PC-9 (cell line): ENCODE measurements at regions of chr13 and their contacts with region 1.

Region 1: DNA sequence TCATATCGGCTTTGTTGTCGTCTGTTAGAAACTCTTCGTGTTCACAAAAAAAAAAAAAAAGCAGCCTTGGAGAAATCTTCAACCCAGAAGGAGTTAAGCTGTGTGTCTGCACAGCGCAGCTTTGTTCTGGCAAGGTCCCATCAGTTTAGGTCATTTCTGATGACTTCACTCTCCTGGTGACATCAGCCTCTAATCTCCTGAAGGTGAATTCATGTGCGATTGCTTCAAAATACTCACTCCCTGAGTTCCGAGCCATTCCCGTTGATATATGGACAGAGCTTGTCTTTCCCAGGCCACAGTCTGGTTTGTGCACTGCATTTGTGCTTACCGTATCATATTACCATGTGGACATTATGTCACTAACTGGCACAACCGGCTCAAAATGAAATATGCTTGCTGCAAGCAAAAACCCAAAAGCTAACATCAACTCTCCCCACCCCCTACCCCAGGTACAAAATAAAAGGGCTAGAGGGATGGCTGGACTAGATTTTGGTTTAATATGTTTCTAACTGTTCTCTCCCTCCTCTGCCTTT is 342.4 kb downstream of the KCNRG start:
- DNase-seq: peak; percentile 67 to 96
- H3K4me3 ChIP-seq: peak overlapping the region; percentile 22; the same call in 1 of the 2 replicates
- H3K27ac ChIP-seq: peak overlapping the region; percentile 79
- H3K4me1 ChIP-seq: peaks cover 27% of the 10 kb centered on the region
- H3K27me3 ChIP-seq: no peaks in the 10 kb centered on the region
- CTCF ChIP-seq: no peak

Region 2: DNA sequence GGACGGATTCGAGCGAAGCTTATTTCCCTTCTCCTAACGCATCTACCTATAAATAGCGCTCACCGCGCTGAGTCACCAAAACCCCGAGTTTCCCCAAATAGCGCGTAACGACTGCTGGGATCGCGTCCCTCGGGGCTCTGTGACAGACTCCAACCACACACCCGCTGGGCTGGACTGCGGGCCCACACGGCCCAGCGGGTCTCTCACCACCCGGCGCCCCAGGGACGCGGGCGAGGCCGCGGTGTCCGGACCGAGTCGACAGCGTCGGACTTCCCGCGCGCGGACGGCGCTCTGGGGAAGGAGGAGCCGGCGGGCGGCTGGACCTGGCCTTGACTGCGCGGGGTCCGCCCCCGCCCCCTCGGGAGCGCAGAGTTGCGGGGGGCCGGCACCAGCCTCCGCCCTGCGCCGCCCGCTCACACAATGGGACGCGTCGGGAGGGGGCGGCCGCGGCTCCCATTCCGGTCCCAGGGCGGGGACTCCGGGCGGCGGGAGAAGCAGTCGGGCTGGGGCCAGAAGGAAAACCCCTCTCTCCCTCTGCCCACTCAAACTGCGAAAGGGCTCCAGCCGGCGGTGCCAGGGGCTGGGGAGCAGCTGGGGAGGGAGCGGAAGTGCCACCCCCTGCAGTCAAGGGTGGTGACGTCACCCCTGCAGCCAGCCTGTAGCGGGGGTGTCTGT is 233.7 kb before region 1 on chr13:
- CTCF ChIA-PET with region 1: no interaction called
- POLR2A ChIA-PET with region 1: no interaction called
- intact Hi-C with region 1: loop called (anchors 1 kb)
- DNase-seq: peak; percentile 82 to 93
- H3K4me3 ChIP-seq: peak overlapping the region; percentile 91
- H3K27ac ChIP-seq: peak overlapping the region; percentile 80
- H3K4me1 ChIP-seq: peaks cover 24% of the 10 kb centered on the region
- H3K27me3 ChIP-seq: no peaks in the 10 kb centered on the region
- CTCF ChIP-seq: no peak

Region 3: GRCh38 chr13:50225193-50226155 is 132.2 kb before region 1 on chr13:
- CTCF ChIA-PET with region 1: no interaction called
- POLR2A ChIA-PET with region 1: interaction called, 10 read pairs
- intact Hi-C with region 1: no loop called
- DNase-seq: no peak
- H3K4me3 ChIP-seq: no peak overlapping the region
- H3K27ac ChIP-seq: no peak overlapping the region
- H3K4me1 ChIP-seq: 0 out of 2 replicates have a peak, but pooled peaks cover 5% of the 10 kb centered on the region
- H3K27me3 ChIP-seq: no peaks in the 10 kb centered on the region
- CTCF ChIP-seq: no peak

Region 4: GRCh38 chr13:50244713-50245574 is 112.7 kb before region 1 on chr13:
- CTCF ChIA-PET with region 1: no interaction called
- POLR2A ChIA-PET with region 1: no interaction called
- intact Hi-C with region 1: loop called (anchors 1 kb)
- DNase-seq: peak; percentile 72 to 97
- H3K4me3 ChIP-seq: no peak overlapping the region
- H3K27ac ChIP-seq: peak overlapping the region; percentile 67
- H3K4me1 ChIP-seq: peaks cover 23% of the 10 kb centered on the region
- H3K27me3 ChIP-seq: no peaks in the 10 kb centered on the region
- CTCF ChIP-seq: no peak

Region 5: DNA sequence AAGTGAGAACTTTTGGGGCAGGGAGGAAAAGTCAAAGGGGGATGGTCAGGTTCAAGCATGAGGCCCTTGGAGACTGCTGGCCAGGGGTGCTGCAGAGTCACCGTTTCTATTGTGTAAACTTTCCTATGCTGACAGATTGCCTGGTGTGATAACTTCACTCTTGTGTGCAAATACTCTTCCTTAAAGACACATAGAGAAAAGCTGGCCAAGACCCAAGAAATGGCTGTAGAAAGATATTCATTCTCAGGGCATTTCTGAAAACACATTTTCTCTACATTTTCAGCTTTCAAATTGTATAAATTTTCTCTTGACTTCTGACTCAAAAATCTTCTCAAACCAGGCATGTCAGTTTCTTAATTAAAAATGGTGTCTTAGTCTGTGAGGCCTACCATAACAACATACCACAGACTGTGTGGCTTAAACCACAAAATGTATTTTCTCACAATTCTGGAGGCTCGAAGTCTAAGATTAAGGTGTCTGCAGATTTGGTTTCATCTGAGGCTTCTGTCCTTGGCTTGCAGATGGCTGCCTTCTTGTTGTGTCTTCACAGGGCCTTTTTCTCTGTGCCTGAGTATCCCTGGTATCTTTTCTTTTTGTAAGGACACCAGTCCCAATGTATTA is 37.9 kb before region 1 on chr13:
- CTCF ChIA-PET with region 1: no interaction called
- POLR2A ChIA-PET with region 1: no interaction called
- intact Hi-C with region 1: loop called (anchors 1 kb)
- DNase-seq: peak; percentile 49 to 77
- H3K4me3 ChIP-seq: no peak overlapping the region
- H3K27ac ChIP-seq: peak overlapping the region; percentile 77
- H3K4me1 ChIP-seq: peaks cover 42% of the 10 kb centered on the region
- H3K27me3 ChIP-seq: no peaks in the 10 kb centered on the region
- CTCF ChIP-seq: no peak

Region 6: DNA sequence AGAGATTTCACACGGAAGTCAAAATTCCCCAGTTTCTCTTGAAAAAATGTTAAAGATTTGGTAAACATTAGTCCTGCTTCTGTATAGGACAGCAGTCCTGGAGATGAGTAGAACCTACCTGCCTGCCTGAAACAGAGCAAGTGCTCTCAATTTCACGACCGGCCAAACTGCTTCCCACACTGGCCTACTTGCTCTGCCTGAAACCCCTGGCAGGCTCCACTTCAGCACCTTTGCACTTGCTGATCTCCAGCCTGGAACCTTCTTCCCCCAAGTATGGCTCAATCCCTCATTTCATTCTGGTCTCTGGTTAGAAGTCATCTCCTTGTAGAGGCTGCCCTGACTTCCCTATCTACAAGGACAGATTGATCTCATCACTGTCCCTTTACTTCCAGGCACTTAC is 214.5 kb after region 1 on chr13:
- CTCF ChIA-PET with region 1: no interaction called
- POLR2A ChIA-PET with region 1: no interaction called
- intact Hi-C with region 1: no loop called
- DNase-seq: no peak
- H3K4me3 ChIP-seq: no peak overlapping the region
- H3K27ac ChIP-seq: no peak overlapping the region
- H3K4me1 ChIP-seq: no peaks in the 10 kb centered on the region
- H3K27me3 ChIP-seq: no peaks in the 10 kb centered on the region
- CTCF ChIP-seq: no peak

Region 7: DNA sequence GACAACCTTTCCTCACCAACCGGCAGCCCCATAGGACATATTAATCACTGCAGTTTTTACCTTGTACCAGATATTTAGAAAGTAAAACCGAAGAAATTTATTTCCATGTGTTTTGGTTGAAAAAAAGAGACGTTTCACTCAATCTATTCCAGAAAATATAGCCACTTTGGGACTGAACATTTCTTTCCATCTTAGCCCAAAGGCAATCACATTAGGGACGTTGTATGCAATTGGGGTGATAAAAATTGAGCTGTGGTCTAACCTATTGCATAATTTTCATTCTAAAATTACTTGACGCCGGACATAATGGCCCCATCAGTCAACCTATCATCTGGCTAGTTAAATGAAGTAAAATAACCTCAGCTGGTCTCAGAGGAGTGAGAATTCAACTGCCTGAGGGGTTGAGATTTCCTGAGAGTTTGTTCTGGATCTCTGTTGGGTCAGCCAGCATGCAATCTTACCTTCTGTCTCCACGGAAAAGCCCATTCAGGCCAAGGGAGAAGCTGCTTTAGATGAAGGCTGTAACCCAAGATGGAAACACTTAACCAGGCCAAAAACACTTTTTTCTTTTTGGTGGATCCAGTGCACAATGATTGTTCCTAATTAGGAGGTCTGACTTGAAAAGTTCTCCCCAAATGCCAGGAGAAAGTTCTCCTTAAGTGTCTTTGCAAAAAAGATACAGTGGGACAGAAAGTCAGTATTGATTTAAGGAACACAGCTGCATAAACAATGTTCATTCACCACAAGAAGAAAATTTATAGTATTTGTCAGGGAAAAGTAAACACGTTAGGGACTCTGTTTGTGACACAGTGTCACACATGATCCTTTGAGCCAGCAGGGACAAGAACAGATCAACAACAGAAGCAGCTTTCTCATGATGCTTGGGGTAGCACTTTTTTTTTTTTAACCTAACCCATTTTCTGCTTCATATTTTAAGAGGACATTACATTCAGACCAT is 451.8 kb after region 1 on chr13:
- CTCF ChIA-PET with region 1: no interaction called
- POLR2A ChIA-PET with region 1: interaction called, 22 read pairs
- intact Hi-C with region 1: no loop called
- DNase-seq: no peak
- H3K4me3 ChIP-seq: no peak overlapping the region
- H3K27ac ChIP-seq: no peak overlapping the region
- H3K4me1 ChIP-seq: no peaks in the 10 kb centered on the region
- H3K27me3 ChIP-seq: no peaks in the 10 kb centered on the region
- CTCF ChIP-seq: no peak

Region 8: DNA sequence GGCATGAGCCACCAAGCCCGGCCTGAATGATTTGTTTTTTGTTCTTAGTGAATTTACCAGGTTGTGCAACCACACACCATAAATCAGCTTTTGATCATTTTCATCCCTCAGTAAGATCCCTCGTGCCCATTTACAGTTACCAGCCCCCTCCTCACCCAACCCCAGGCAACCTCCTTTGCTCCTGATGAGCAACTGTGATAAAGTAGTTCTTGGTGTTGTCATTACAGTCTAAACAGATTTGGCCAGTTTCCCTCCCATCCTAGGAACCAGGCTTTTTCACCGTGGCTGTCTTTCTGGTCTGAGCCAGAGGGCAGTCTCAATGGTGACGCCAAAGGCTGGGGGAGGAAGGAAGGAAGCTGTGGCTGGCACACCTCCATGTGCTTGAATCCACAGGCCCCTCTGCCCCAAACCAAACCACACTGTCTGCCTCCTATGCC is 1165.4 kb after region 1 on chr13:
- CTCF ChIA-PET with region 1: no interaction called
- POLR2A ChIA-PET with region 1: no interaction called
- intact Hi-C with region 1: no loop called
- DNase-seq: peak; percentile 49 to 55
- H3K4me3 ChIP-seq: no peak overlapping the region
- H3K27ac ChIP-seq: peak overlapping the region; percentile 95
- H3K4me1 ChIP-seq: peaks cover 57% of the 10 kb centered on the region
- H3K27me3 ChIP-seq: no peaks in the 10 kb centered on the region
- CTCF ChIP-seq: no peak